Activated B cell treated with CpG ODN at 0.5 μM for 24 hours (primary cell): ENCODE measurements at regions of chr7 and their contacts with region 1.

Region 1: DNA sequence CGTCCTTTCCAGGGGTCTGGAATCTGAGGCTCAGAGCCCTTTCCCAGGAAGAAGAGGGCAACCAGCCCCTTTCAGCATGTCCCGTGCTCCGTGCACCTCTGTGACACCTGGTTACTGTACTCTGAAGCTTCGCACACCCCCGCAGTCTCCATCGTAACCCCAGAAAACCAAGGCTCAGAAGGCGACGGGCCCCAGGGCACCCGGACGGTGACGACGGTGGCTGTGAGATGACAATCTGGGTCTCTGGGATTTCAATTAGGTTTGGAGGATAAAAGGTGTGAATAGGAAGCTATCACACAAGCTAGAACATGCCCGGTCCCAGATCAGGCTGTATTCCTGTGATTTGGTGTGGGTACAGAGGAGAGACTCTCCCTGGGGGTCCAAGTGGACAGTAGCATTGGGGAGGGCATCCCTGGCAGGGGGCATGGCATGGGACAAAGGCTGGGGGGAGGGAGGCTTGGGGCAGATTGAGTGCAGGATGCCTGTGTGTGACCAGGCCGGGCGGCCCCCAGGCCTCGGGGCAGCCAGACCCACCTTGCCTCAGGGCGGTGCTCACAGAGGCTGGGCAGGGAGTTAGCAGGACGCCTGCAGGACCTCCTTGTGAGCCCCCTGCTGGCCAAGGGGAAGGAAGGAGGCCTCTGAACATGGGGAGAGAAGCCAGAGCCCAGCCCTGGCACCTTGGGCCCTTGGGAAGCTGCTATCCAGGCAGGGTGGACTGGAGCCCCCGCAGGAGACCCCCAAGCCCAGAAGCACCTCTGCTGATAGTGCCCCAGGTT is 23.4 kb upstream of the PSMG3 start:
- DNase-seq: peak; percentile 25
- ATAC-seq: peak; percentile 23
- H3K4me3 Mint-ChIP-seq: no peak overlapping the region
- H3K27ac Mint-ChIP-seq: no peak overlapping the region
- H3K4me1 Mint-ChIP-seq: peaks cover 29% of the 10 kb centered on the region
- H3K27me3 Mint-ChIP-seq: peaks cover 28% of the 10 kb centered on the region
- CTCF ChIP-seq: no peak

Region 2: DNA sequence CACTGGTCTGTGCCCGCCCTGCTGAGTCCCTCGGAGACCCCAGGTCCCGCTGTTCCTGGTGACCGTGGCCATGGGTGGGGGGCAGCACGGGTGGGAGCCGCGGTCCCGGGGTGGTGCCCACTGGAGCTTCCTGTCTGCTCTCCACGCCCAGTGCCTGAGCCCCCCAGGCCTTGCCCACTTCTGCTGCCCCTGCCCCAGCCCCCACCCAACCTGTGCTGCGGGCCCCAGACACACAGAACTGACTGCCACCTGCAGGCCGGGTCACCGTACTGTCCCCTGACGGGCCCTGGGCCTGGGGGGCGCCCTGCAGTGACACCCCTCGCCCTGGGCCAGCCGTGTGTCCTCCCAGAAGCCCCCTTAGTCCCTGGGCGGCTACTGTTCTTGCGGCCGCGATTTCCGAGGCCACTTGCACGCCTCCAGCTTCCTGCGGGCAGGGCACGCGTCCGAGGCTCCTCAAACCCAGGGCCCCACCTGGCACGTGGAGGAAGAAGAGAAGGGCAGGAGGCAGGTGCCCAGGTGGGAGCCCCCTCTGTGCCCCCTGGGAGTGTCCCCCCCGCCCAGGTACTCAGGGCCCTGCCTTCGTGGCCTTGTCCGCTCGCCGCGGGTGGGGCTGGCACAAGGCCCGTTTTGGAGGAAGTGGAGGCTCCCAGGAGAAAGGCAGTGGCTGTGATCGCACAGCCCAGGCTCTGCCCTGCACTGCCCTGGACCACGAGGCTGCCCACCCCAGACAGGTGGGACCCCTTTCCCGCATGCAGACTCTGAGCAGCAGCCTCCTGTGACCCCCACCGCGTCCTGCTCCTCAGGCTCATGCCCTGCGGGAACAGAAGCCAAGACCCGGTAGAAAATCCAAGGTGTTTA is 47.7 kb before region 1 on chr7:
- CTCF ChIA-PET with region 1: no interaction called
- POLR2A ChIA-PET with region 1: no interaction called
- intact Hi-C with region 1: no loop called
- DNase-seq: no peak
- ATAC-seq: no peak
- H3K4me3 Mint-ChIP-seq: no peak overlapping the region
- H3K27ac Mint-ChIP-seq: no peak overlapping the region
- H3K4me1 Mint-ChIP-seq: peaks cover 3% of the 10 kb centered on the region
- H3K27me3 Mint-ChIP-seq: no peaks in the 10 kb centered on the region
- CTCF ChIP-seq: no peak

Region 3: GRCh38 chr7:1555809-1556540 is 37.3 kb before region 1 on chr7 and contains the start of gene TMEM184A:
- CTCF ChIA-PET with region 1: no interaction called
- POLR2A ChIA-PET with region 1: interaction called, 10 read pairs
- intact Hi-C with region 1: no loop called
- DNase-seq: no peak
- ATAC-seq: peak; percentile 85
- H3K4me3 Mint-ChIP-seq: no peak within 1 kb of the TSS
- H3K27ac Mint-ChIP-seq: no peak within 1 kb of the TSS
- H3K4me1 Mint-ChIP-seq: peaks cover 3% of the 10 kb centered on the region
- H3K27me3 Mint-ChIP-seq: no peaks in the 10 kb centered on the region
- CTCF ChIP-seq: no peak
- total RNA-seq, gene TMEM184A: not detected in 2 replicates

Region 4: GRCh38 chr7:1569833-1570633 is 23.2 kb before region 1 on chr7 and contains the start of gene PSMG3:
- CTCF ChIA-PET with region 1: no interaction called
- POLR2A ChIA-PET with region 1: no interaction called
- intact Hi-C with region 1: loop called (anchors 1 kb)
- DNase-seq: peak; percentile 91
- ATAC-seq: peak; percentile 90
- H3K4me3 Mint-ChIP-seq: peak within 1 kb of the TSS; percentile 86
- H3K27ac Mint-ChIP-seq: peak within 1 kb of the TSS; percentile 88
- H3K4me1 Mint-ChIP-seq: peaks cover 26% of the 10 kb centered on the region
- H3K27me3 Mint-ChIP-seq: no peaks in the 10 kb centered on the region
- CTCF ChIP-seq: no peak
- total RNA-seq, gene PSMG3: 29.5 and 30.5 TPM in 2 replicates